Pancreas (tissue), 10 donors: ENCODE measurements at regions of chr14 and their contacts with region 1.

Region 1: DNA sequence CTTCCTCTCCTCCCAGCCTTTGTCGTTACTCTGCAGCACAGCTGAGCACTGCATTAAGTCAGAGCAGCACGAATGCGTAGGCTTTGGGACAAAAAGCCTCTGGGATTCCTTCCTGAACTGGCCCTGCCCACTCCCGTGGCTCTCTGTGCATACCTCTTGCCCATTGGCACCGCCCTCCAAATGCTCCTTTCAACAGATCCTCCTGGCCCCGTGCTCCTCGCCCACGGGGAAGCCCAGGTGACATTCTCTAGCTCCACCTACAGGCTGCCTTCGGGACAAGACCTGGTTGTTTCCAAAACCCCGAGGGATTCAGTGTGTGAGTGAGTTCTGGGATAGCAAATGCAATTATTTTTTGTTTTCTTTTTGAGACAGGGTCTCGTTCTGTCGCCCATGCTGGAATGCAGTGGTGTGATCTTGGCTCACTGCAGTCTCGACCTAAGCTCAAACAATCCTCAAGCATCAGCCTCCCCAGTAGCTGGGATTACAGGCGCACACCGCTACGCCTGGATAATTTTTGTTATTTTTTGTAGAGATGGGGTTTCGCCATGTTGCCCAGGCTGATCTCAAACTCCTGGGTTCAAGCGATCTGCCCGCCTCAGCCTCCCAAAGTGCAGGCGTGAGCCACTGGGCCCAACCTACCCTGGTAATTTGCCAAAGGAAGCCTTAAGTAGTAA is 17.9 kb upstream of the TDRD9 start:
- DNase-seq: peak; percentile 83 to 93 (median 88)
- ATAC-seq: peak; percentile 98 to 100 (median 99)
- H3K4me3 ChIP-seq: no peak overlapping the region
- H3K27ac ChIP-seq: peak overlapping the region in 2 of 4 donors; percentile 30 to 39
- H3K4me1 ChIP-seq: peaks cover 0 to 4% (median 0%) of the 10 kb centered on the region in 3 donors
- H3K27me3 ChIP-seq: no peaks in the 10 kb centered on the region
- CTCF ChIP-seq: peak; percentile 44 to 83 (median 68)

Region 2: DNA sequence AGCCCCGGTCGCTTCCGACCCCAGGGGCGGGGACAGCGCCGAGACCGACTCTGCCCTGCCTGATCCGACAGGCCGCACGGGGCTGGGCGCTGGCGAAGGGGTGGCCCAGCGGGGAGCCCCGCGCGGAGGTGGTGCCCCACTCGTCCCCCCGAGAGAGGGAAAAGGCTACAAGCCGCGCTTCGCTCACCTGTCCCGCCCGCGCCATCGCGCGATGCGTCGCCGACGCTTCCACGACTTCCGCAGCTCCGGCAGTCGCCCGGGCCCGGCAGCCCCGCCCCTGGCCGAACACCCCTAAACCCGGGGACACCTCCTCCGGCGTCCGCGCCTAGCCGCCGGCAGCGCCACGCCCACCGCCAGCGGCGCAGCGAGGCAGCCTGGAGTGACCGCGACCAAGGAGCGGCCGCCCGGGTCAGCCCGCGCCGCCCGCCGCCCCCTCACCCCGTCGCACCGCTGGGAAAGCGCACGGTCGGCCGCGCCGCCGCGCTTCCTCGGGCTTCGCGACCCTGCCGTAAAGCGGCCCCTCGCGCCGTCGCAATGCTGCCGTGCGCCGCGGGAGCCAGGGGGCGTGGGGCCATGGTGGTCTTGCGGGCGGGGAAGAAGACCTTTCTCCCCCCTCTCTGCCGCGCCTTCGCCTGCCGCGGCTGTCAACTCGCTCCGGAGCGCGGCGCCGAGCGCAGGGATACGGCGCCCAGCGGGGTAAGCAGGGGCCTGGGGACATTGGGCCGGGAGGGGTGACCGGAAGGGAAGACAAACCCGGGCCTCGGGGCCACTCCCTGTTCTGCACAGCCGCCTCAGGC is 347.8 kb before region 1 on chr14 and contains the starts of genes BAG5 and COA8:
- intact Hi-C with region 1: loop called in 1 of 3 experiments (anchors 10 kb)
- DNase-seq: peak; percentile 80 to 95 (median 85)
- ATAC-seq: peak; percentile 87 to 91 (median 88)
- H3K4me3 ChIP-seq: peak within 1 kb of the TSS; percentile 73 to 100 (median 90)
- H3K27ac ChIP-seq: peak within 1 kb of the TSS; percentile 81 to 94 (median 92)
- H3K4me1 ChIP-seq: peaks cover 11 to 36% (median 12%) of the 10 kb centered on the region in 3 donors
- H3K27me3 ChIP-seq: no peaks in the 10 kb centered on the region
- CTCF ChIP-seq: no peak
- total RNA-seq, gene BAG5: 6.4 to 13.4 (median 10.0) TPM
- total RNA-seq, gene COA8: 17.0 to 28.7 (median 23.9) TPM

Region 3: DNA sequence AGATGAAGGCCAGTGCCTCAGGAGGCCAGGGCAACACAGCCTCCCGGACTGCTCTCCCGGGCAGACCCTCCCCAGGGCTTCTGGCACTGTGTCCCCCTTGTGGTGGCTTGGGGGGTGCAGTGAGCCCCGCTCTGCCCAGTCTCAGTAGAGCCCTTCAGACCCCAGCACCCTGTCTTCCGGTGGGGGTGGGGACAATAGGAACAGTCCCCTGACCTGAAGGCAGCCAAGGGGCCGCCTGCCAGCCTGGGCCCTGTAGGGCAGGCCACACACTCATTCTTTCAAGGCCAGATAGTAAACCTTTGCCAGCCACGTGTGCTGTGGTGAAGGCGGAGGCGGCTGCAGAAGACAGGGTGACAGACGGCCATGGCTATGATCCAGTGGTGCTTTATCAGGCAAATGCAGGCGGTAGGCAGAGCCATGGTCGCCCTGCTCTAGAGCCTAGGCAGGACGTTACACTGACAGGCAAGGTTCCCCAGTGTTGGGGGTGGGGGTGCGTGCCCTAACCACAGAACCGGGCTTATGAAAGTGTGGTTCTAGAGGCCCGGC is 179.8 kb before region 1 on chr14:
- intact Hi-C with region 1: loop called in 1 of 3 experiments (anchors 10 kb)
- DNase-seq: peak; percentile 77 to 94 (median 92)
- ATAC-seq: peak; percentile 90 to 93 (median 93)
- H3K4me3 ChIP-seq: no peak overlapping the region
- H3K27ac ChIP-seq: peak overlapping the region in 2 of 4 donors; percentile 25 to 53
- H3K4me1 ChIP-seq: peaks cover 10 to 24% (median 24%) of the 10 kb centered on the region in 3 donors
- H3K27me3 ChIP-seq: no peaks in the 10 kb centered on the region
- CTCF ChIP-seq: no peak

Region 4: GRCh38 chr14:103808403-103809001 is 101.9 kb before region 1 on chr14:
- intact Hi-C with region 1: loop called in 2 of 3 experiments (anchors 5 kb)
- DNase-seq: peak; percentile 78 to 87 (median 82)
- ATAC-seq: peak; percentile 79 to 91 (median 88)
- H3K4me3 ChIP-seq: no peak overlapping the region
- H3K27ac ChIP-seq: no peak overlapping the region
- H3K4me1 ChIP-seq: peaks cover 0 to 11% (median 8%) of the 10 kb centered on the region in 3 donors
- H3K27me3 ChIP-seq: no peaks in the 10 kb centered on the region
- CTCF ChIP-seq: peak; percentile 57 to 84 (median 80)